Breast epithelium (tissue), 4 donors: ENCODE measurements at regions of chrX and their contacts with region 1.

Region 1: DNA sequence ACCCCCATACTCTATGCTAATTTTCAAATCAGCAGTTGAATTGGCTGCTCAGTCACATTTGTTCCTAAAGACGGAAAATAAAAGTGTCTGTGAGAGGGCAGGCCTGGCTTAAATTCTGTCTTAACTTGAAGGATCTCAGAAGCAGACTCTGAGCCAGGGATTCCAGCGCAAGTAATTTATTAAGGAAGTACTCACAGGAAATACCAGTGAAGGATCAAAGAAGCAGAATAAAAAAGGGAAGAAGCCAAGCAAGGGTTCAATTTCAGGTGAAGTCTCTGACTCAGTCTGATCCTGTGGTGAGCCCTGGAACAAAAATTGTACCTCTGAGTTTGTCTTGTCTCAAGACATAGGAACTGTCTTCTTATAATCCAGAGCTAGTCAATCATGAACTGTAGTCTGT is 52.2 kb downstream of the IL1RAPL1 start:
- DNase-seq: no peak
- H3K4me3 ChIP-seq: no peak overlapping the region
- H3K27ac ChIP-seq: no peak overlapping the region
- H3K4me1 ChIP-seq: no peaks in the 10 kb centered on the region
- H3K27me3 ChIP-seq: peaks cover 0 to 7% of the 10 kb centered on the region in 2 donors
- CTCF ChIP-seq: no peak
- POLR2A ChIP-seq: no peak

Region 2: DNA sequence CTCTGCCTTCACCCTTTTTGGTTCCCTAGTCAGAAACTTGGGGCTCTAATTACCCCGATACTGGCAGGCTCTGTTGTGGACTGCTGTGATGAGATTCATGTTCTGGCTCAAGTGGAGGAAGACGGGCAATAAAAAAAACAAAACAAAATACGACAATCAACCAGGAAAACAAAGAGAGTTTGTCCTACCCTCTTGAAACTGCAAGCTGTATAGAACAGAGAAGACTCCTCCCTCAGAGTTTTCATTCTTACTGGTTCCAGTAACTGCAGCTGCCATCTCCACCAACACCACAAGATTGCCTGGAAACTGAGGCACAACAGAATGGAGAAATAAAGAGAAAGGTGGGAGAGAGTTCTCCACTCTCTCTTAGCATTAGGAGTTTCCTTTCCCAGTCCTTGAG is 63.3 kb before region 1 on chrX:
- intact Hi-C with region 1: no loop called
- DNase-seq: no peak
- H3K4me3 ChIP-seq: no peak overlapping the region
- H3K27ac ChIP-seq: no peak overlapping the region
- H3K4me1 ChIP-seq: no peaks in the 10 kb centered on the region
- H3K27me3 ChIP-seq: peaks cover 0 to 16% of the 10 kb centered on the region in 2 donors
- CTCF ChIP-seq: no peak
- POLR2A ChIP-seq: no peak

Region 3: DNA sequence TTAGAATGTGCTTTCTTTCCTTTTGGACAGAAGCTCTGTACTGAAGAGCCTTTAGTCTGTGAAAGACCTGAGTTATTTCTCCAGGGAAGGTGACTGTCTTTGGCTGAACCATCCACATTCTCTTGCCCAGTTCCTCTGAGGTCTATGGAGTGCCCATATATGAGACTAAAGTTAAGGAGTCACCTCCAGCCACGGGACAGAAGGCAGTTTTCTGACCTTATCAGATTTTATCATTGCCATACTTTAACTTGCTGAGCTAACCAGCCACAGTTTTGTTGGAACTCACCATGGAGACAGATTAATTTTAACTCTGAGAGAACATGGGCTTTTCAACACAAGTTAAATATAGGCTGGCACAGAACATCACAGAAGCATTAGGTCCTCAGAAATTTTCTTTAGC is 25.9 kb before region 1 on chrX:
- intact Hi-C with region 1: no loop called
- DNase-seq: no peak
- H3K4me3 ChIP-seq: no peak overlapping the region
- H3K27ac ChIP-seq: no peak overlapping the region
- H3K4me1 ChIP-seq: no peaks in the 10 kb centered on the region
- H3K27me3 ChIP-seq: peaks cover 0 to 12% of the 10 kb centered on the region in 2 donors
- CTCF ChIP-seq: no peak
- POLR2A ChIP-seq: no peak

Region 4: DNA sequence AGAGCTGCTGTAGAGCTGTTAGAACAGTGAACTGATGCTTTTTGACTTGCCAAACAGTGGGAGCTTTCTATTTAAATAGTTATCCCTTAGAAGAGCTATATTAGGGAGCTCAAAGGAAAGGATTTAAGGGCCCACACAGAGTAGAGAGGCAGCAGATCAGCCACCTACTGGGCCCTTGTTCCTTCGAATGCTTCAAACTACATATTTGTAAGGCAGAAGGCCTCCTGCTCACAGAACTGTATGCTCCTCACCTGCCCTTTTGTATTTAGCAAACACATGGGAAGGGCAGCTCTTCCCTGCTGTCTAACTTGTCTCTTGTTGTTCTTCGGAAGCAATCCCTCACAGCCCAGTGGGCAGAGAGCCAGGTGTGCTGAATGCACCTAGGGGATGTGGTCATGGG is 14.2 kb before region 1 on chrX:
- intact Hi-C with region 1: no loop called
- DNase-seq: no peak
- H3K4me3 ChIP-seq: no peak overlapping the region
- H3K27ac ChIP-seq: no peak overlapping the region
- H3K4me1 ChIP-seq: no peaks in the 10 kb centered on the region
- H3K27me3 ChIP-seq: peaks cover 0 to 23% of the 10 kb centered on the region in 2 donors
- CTCF ChIP-seq: no peak
- POLR2A ChIP-seq: no peak

Region 5: GRCh38 chrX:28876408-28876807 is 237.0 kb after region 1 on chrX:
- intact Hi-C with region 1: loop called (anchors 5 kb)
- DNase-seq: no peak
- H3K4me3 ChIP-seq: no peak overlapping the region
- H3K27ac ChIP-seq: no peak overlapping the region
- H3K4me1 ChIP-seq: no peaks in the 10 kb centered on the region
- H3K27me3 ChIP-seq: no peaks in the 10 kb centered on the region
- CTCF ChIP-seq: no peak
- POLR2A ChIP-seq: no peak

Region 6: GRCh38 chrX:29113221-29113620 is 473.8 kb after region 1 on chrX:
- intact Hi-C with region 1: loop called (anchors 5 kb)
- DNase-seq: no peak
- H3K4me3 ChIP-seq: no peak overlapping the region
- H3K27ac ChIP-seq: no peak overlapping the region
- H3K4me1 ChIP-seq: no peaks in the 10 kb centered on the region
- H3K27me3 ChIP-seq: peaks cover 0 to 15% of the 10 kb centered on the region in 2 donors
- CTCF ChIP-seq: no peak
- POLR2A ChIP-seq: no peak